Brain microvascular endothelial cell (primary cell): ENCODE measurements at regions of chr1 and their contacts with region 1.

Region 1: DNA sequence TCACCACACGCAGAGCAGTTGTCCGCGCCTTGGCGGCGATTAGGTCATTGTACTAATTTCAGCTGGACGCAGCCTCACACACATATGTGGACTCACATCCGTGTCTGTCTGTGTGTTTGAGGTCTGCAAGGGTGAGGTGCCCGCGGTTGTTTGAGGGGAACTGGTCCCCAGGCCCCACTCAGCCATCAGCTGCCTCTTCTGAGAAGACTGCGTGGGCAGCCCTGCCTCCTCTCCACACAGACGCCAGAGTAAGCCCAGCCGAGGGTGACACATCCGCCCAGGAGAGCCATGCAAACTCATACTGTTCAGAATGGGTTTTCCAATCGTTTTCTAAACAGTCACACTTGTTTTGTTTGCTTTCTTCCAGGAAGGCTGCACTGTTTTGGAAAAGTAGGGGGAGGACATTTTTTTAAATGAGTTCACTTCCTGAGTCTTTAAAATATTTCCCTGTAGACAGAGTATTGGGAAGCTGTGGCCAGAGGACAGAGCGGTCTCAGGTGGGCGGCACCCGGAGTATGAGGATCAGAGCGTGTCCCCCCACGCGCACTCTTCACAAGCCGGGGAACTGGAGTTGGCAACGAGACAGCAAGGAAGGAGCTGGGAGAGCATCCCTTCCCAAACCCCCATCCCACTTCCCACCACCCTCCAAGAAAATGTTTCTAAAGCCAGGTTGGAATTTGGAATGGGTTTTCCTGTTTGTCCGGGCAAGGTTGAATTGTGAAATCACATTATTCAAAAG is 53.3 kb downstream of the TOMM20 start:
- DNase-seq: peak; percentile 92
- H3K4me3 ChIP-seq: peak overlapping the region; percentile 15
- H3K27ac ChIP-seq: peak overlapping the region; percentile 93
- H3K27me3 ChIP-seq: no peaks in the 10 kb centered on the region
- CTCF ChIP-seq: no peak

Region 2: GRCh38 chr1:234851450-234852438 is 223.6 kb before region 1 on chr1:
- in situ Hi-C with region 1: loop called (anchors 10 kb)
- DNase-seq: peak; percentile 33
- H3K4me3 ChIP-seq: no peak overlapping the region
- H3K27ac ChIP-seq: no peak overlapping the region
- H3K27me3 ChIP-seq: no peaks in the 10 kb centered on the region
- CTCF ChIP-seq: no peak

Region 3: GRCh38 chr1:234978397-234979295 is 96.7 kb before region 1 on chr1:
- in situ Hi-C with region 1: loop called (anchors 10 kb)
- DNase-seq: peak; percentile 89
- H3K4me3 ChIP-seq: no peak overlapping the region
- H3K27ac ChIP-seq: peak overlapping the region; percentile 98
- H3K27me3 ChIP-seq: no peaks in the 10 kb centered on the region
- CTCF ChIP-seq: peak; percentile 28